Transverse colon (tissue), 4 donors: ENCODE measurements at regions of chr12 and their contacts with region 1.

Region 1: GRCh38 chr12:4118017-4118510 is 155.5 kb upstream of the CCND2 start:
- DNase-seq: peak; percentile 80
- H3K4me3 ChIP-seq: no peak overlapping the region
- H3K27ac ChIP-seq: peak overlapping the region; percentile 39 to 75 (median 62)
- H3K4me1 ChIP-seq: peaks cover 23 to 33% (median 27%) of the 10 kb centered on the region in 4 donors
- H3K27me3 ChIP-seq: no peaks in the 10 kb centered on the region
- CTCF ChIP-seq: no peak
- EP300 ChIP-seq: no peak
- POLR2A ChIP-seq: peak; percentile 5

Region 2: DNA sequence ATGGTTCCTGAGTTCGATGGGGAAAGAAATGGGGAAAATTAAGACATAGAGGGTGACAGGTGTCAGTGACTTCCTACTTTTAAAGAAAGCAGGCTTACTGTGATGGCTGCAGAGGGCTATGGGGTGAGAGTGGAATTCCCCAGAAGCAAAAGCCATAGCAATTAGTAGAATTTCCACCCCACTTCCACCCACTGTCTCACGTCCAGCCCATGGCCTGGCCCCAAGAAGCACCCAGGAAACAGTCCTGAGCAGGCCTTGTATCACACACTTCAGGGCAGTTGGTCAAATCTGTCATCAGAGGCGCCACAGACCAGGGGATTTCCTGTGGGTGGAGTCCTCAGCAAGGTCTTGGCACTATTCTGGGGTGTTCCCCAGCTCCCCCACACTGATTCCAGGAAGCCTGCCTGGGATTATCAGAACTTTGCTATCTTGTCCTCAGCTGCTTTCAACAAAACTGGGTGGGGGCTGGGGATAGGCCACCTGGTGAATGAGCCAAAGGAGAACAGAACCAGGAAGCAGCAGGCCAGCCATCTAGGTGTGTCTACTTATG is 35.4 kb after region 1 on chr12:
- in situ Hi-C with region 1: no loop called
- intact Hi-C with region 1: no loop called
- DNase-seq: peak; percentile 50
- H3K4me3 ChIP-seq: no peak overlapping the region
- H3K27ac ChIP-seq: peak overlapping the region; percentile 20 to 37 (median 24)
- H3K4me1 ChIP-seq: peaks cover 0 to 27% (median 6%) of the 10 kb centered on the region in 4 donors
- H3K27me3 ChIP-seq: no peaks in the 10 kb centered on the region
- CTCF ChIP-seq: no peak
- EP300 ChIP-seq: no peak
- POLR2A ChIP-seq: no peak

Region 3: GRCh38 chr12:5745265-5745888 is 1627.3 kb after region 1 on chr12:
- in situ Hi-C with region 1: no loop called
- intact Hi-C with region 1: loop called (anchors 5 kb)
- DNase-seq: peak; percentile 68
- H3K4me3 ChIP-seq: no peak overlapping the region
- H3K27ac ChIP-seq: no peak overlapping the region
- H3K4me1 ChIP-seq: no peaks in the 10 kb centered on the region
- H3K27me3 ChIP-seq: no peaks in the 10 kb centered on the region
- CTCF ChIP-seq: peak; percentile 58 to 78 (median 63)
- EP300 ChIP-seq: no peak
- POLR2A ChIP-seq: no peak